CD8-positive, alpha-beta T cell (primary cell): ENCODE measurements at regions of chr5 and their contacts with region 1.

Region 1: DNA sequence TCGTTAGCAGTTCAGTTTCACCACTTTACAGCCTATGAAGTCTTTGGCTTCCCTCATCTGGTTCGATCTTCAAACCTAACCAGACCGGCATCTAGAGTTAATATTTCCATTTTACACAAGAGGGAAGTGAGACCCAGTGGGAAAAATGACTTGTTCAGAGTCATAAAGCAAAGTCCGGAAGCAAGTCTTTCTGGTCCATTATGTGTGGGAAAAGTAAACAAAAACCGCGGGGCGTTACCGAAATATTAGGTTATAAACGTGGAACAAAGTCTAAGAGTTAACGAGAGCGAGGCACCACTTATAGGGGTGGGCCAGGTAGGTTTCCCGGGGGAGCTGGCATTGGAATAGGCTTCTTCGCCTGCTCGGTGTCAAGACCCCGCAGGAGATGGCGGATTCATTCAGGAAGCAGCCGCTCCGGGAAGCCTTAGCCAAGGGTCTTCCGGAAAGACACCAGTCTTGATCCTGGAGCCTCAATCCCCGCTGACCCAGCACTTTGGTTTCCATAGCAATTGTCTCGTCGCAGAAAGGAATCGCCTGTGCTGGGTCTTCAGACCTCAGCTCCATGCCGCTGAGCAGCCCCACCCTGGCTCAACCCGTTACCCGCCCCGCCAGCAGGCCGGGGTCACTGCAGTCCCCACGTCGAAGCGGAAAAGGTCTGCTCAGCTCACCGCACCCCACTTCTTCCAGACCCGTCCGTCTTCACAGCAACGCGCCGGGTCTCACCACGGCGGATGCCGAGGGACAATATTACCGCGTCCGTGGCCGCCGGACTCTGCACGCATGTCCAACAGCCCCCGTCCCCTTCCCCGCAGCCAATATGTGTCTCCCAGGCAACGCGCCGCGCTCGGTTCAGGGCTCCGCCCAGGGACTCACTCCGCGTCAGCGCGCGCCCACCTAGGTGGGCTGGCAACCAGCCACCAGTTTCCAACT is at the start of gene C5orf52:
- DNase-seq: peak in 3 of 9 experiments; percentile 11 to 17 (median 14)
- ATAC-seq: no peak
- H3K4me3 ChIP-seq: peak within 1 kb of the TSS; percentile 44
- H3K4me3 Mint-ChIP-seq: peak within 1 kb of the TSS; percentile 85
- H3K27ac ChIP-seq: no peak within 1 kb of the TSS
- H3K27ac Mint-ChIP-seq: no peak within 1 kb of the TSS
- H3K4me1 ChIP-seq: peaks cover 18% of the 10 kb centered on the region
- H3K4me1 Mint-ChIP-seq: peaks cover 24% of the 10 kb centered on the region
- H3K27me3 ChIP-seq: peaks cover 14 to 25% of the 10 kb centered on the region in 2 experiments
- H3K27me3 Mint-ChIP-seq: peaks cover 41% of the 10 kb centered on the region
- CTCF ChIP-seq: no peak
- total RNA-seq, gene C5orf52: not detected

Region 2: GRCh38 chr5:157858527-157859226 is 187.8 kb after region 1 on chr5 and contains the start of gene CLINT1:
- CTCF ChIA-PET with region 1: no interaction called
- POLR2A ChIA-PET with region 1: no interaction called
- intact Hi-C with region 1: no loop called
- DNase-seq: peak; percentile 66 to 93 (median 87)
- ATAC-seq: peak; percentile 94
- H3K4me3 ChIP-seq: peak within 1 kb of the TSS; percentile 78 to 86
- H3K4me3 Mint-ChIP-seq: peak within 1 kb of the TSS; percentile 89
- H3K27ac ChIP-seq: peak within 1 kb of the TSS; percentile 74 to 90
- H3K27ac Mint-ChIP-seq: peak within 1 kb of the TSS; percentile 95
- H3K4me1 ChIP-seq: peaks cover 41% of the 10 kb centered on the region
- H3K4me1 Mint-ChIP-seq: peaks cover 65% of the 10 kb centered on the region
- H3K27me3 ChIP-seq: no peaks in the 10 kb centered on the region
- H3K27me3 Mint-ChIP-seq: no peaks in the 10 kb centered on the region
- CTCF ChIP-seq: no peak
- total RNA-seq, gene CLINT1: 94.7 to 101 TPM

Region 3: DNA sequence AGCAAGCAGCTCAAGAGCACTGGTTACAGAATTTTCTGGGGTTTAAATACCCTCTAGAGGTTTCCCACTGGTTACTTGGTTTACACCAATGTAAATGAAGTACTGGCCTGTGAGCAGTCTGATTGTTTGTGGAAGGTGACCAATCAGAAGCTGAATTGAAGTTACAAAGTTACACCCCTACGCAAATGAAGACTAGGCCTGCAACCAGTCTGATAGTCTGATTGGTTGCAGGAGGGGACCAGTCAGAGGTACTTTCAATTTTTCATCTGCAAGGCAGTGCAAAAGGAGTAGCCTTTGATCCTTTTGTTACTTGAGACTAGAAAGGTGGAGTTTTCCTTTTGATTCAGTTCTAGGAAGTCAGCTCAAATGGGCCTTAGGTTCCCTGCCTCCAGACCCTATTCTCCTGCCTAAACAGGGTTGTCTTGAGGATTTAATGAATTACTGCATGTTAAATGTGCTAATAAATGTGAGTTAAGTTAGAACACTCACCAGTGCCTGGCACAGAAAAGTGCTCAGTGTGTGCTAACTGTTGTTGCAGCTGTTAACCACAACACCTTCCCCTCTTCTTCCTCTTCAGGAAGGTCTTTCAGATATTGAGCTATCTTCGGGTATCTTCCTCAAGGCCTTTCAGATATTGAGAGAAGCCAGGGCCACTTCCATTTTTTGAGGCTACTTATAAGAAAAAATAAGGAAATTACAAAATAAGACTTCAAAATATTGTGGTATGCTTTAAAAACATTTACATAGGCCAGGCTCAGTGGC is 220.1 kb after region 1 on chr5:
- CTCF ChIA-PET with region 1: no interaction called
- POLR2A ChIA-PET with region 1: no interaction called
- intact Hi-C with region 1: no loop called
- DNase-seq: peak in 2 of 9 experiments; percentile 27 to 32
- ATAC-seq: peak; percentile 62
- H3K4me3 ChIP-seq: no peak overlapping the region
- H3K4me3 Mint-ChIP-seq: no peak overlapping the region
- H3K27ac ChIP-seq: peak overlapping the region in 1 of 2 experiments; percentile 16
- H3K27ac Mint-ChIP-seq: peak overlapping the region; percentile 22
- H3K4me1 ChIP-seq: peaks cover 9% of the 10 kb centered on the region
- H3K4me1 Mint-ChIP-seq: peaks cover 15% of the 10 kb centered on the region
- H3K27me3 ChIP-seq: no peaks in the 10 kb centered on the region
- H3K27me3 Mint-ChIP-seq: no peaks in the 10 kb centered on the region
- CTCF ChIP-seq: no peak

Region 4: DNA sequence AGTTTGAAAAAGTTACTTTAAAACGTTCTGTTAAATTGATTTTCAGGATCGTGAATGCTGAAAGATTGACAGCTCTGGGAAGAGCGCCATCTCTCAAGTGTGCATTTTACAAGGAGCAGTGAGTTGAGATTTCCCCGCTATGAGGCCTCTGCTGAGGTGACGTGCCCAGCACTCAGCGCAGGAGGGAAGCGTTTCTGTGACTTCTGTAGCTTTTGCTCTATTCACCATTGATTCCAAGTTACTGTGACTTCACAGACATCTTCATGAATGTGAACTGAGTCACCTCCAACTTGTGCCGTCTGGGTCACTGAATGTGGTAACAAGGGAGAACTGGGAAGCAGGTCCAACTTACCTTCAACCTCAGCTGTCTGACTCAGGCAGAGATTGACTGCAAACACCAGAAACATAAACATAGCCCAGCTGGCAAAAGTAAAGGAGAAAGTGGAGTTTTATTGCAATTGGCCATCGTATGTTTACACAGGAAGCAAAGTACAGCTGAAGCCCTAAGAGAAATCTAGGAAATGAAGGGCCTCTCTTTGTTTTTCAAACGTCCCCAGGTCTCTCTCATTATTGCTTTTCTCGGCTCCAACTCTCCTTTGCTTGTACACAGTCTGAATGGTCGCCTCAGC is 616.8 kb after region 1 on chr5:
- CTCF ChIA-PET with region 1: no interaction called
- POLR2A ChIA-PET with region 1: no interaction called
- intact Hi-C with region 1: loop called in 1 of 2 experiments (anchors 5 kb)
- DNase-seq: no peak
- ATAC-seq: no peak
- H3K4me3 ChIP-seq: no peak overlapping the region
- H3K4me3 Mint-ChIP-seq: no peak overlapping the region
- H3K27ac ChIP-seq: no peak overlapping the region
- H3K27ac Mint-ChIP-seq: no peak overlapping the region
- H3K4me1 ChIP-seq: no peaks in the 10 kb centered on the region
- H3K4me1 Mint-ChIP-seq: no peaks in the 10 kb centered on the region
- H3K27me3 ChIP-seq: no peaks in the 10 kb centered on the region
- H3K27me3 Mint-ChIP-seq: no peaks in the 10 kb centered on the region
- CTCF ChIP-seq: no peak